ENCODE measurements at regions of chr2 and their contacts with region 1.

Region 1: GRCh38 chr2:148874868-148875341 is at the start of gene KIF5C:
- DNase-seq: peak; percentile 67 to 83 (median 76)
- ATAC-seq: peak; percentile 95
- H3K4me3 ChIP-seq: peak within 1 kb of the TSS; percentile 45
- H3K4me3 Mint-ChIP-seq: peak within 1 kb of the TSS; percentile 77 to 89 (median 86)
- H3K27ac ChIP-seq: no peak within 1 kb of the TSS
- H3K27ac Mint-ChIP-seq: peak within 1 kb of the TSS in 6 of 9 donors; percentile 4 to 82 (median 72)
- H3K4me1 ChIP-seq: peaks cover 5 to 6% of the 10 kb centered on the region in 2 donors
- H3K4me1 Mint-ChIP-seq: peaks cover 0 to 19% (median 14%) of the 10 kb centered on the region in 7 donors
- H3K27me3 ChIP-seq: no peaks in the 10 kb centered on the region
- H3K27me3 Mint-ChIP-seq: peaks cover 8 to 33% (median 28%) of the 10 kb centered on the region in 5 donors
- total RNA-seq, gene KIF5C: 3.6 to 14.3 (median 6.8) TPM

Region 2: DNA sequence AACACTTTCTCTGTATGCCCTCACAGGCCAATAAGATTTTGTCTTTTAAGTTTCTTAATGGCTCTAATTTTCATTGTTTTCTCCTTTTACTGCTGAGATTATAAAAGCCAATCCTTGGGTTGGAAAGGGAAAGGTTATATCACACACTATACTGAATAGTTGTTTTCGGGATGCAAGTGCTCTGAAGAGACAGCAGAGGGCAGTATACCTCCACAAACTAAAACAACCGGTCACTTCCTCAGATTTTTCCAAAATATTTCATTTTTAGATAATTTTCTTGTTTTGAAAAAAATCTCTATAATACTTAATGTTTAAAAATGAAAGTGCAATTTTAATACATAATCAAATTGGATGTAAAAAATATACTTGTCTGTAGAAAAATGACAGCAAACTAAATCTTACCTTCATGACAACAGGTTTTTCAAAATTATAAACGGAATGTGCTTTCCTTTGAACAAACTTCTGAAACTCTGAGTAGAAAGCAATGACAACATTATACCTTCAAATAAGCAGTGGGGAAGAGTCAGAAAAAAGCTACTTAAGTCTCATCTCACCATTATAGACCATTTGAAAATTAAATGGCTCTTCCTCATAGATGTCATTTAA is 937.1 kb before region 1 on chr2:
- CTCF ChIA-PET with region 1: no interaction called
- POLR2A ChIA-PET with region 1: no interaction called
- intact Hi-C with region 1: loop called (anchors 5 kb)
- DNase-seq: peak in 5 of 9 donors; percentile 25 to 40 (median 34)
- ATAC-seq: peak; percentile 79
- H3K4me3 ChIP-seq: no peak overlapping the region
- H3K4me3 Mint-ChIP-seq: no peak overlapping the region
- H3K27ac ChIP-seq: no peak overlapping the region
- H3K27ac Mint-ChIP-seq: peak overlapping the region in 4 of 9 donors; percentile 26 to 75 (median 42)
- H3K4me1 ChIP-seq: no peaks in the 10 kb centered on the region
- H3K4me1 Mint-ChIP-seq: peaks cover 0 to 2% (median 0%) of the 10 kb centered on the region in 7 donors
- H3K27me3 ChIP-seq: no peaks in the 10 kb centered on the region
- H3K27me3 Mint-ChIP-seq: no peaks in the 10 kb centered on the region

Region 3: DNA sequence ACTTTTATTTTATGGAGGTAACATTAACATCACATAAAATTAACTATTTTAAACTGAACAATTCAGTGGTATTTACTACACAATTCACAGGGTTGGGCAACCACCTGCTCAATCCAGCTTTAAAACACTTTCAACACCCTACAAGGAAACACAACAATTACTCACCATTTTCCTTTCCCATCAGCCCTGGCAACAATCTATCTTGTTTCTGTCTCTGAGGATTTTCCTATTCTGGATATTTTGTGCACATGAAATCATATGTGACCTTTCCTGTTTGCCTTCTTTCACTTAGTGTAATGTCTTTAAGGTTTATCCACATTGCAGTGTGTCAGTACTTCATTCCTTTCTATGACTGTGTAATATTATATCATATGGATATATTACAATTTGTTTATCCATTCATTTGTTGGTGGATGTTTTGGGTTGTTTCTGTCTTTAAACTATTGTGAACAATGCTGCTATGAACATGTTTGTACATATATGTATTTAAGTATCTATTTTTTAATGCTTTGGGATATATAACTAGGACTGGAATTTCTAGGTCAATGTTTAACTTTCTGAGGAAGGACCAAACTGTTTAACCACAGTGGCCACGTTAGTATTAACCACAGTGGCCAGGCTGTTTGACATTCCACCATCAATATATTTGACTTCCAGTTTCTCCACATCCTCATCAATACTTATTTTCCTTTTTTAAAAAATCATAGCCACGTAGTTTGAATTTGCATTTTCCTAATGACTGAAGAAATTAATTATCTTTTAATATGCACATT is 72.3 kb before region 1 on chr2:
- CTCF ChIA-PET with region 1: no interaction called
- POLR2A ChIA-PET with region 1: no interaction called
- intact Hi-C with region 1: loop called in 1 of 2 experiments (anchors 5 kb)
- DNase-seq: no peak
- ATAC-seq: no peak
- H3K4me3 ChIP-seq: no peak overlapping the region
- H3K4me3 Mint-ChIP-seq: no peak overlapping the region
- H3K27ac ChIP-seq: no peak overlapping the region
- H3K27ac Mint-ChIP-seq: no peak overlapping the region
- H3K4me1 ChIP-seq: no peaks in the 10 kb centered on the region
- H3K4me1 Mint-ChIP-seq: no peaks in the 10 kb centered on the region
- H3K27me3 ChIP-seq: no peaks in the 10 kb centered on the region
- H3K27me3 Mint-ChIP-seq: peaks cover 4 to 30% (median 6%) of the 10 kb centered on the region in 5 donors

Region 4: GRCh38 chr2:148888003-148888501 is 13.1 kb after region 1 on chr2:
- CTCF ChIA-PET with region 1: interaction called, 6 read pairs
- POLR2A ChIA-PET with region 1: no interaction called
- intact Hi-C with region 1: loop called (anchors 1 kb)
- DNase-seq: peak in 2 of 9 donors; percentile 3 to 16
- ATAC-seq: peak; percentile 47
- H3K4me3 ChIP-seq: peak overlapping the region; percentile 28
- H3K4me3 Mint-ChIP-seq: peak overlapping the region; percentile 68 to 88 (median 75)
- H3K27ac ChIP-seq: no peak overlapping the region
- H3K27ac Mint-ChIP-seq: no peak overlapping the region
- H3K4me1 ChIP-seq: peaks cover 0 to 4% of the 10 kb centered on the region in 2 donors
- H3K4me1 Mint-ChIP-seq: peaks cover 0 to 18% (median 15%) of the 10 kb centered on the region in 7 donors
- H3K27me3 ChIP-seq: peaks cover 0 to 15% of the 10 kb centered on the region in 2 donors
- H3K27me3 Mint-ChIP-seq: peaks cover 13 to 70% (median 37%) of the 10 kb centered on the region in 5 donors

Region 5: GRCh38 chr2:148989882-148990493 is 115.1 kb after region 1 on chr2:
- CTCF ChIA-PET with region 1: no interaction called
- POLR2A ChIA-PET with region 1: no interaction called
- intact Hi-C with region 1: loop called in 1 of 2 experiments (anchors 5 kb)
- DNase-seq: peak in 8 of 9 donors; percentile 28 to 65 (median 56)
- ATAC-seq: peak; percentile 86
- H3K4me3 ChIP-seq: no peak overlapping the region
- H3K4me3 Mint-ChIP-seq: no peak overlapping the region
- H3K27ac ChIP-seq: no peak overlapping the region
- H3K27ac Mint-ChIP-seq: no peak overlapping the region
- H3K4me1 ChIP-seq: no peaks in the 10 kb centered on the region
- H3K4me1 Mint-ChIP-seq: peaks cover 0 to 4% (median 4%) of the 10 kb centered on the region in 7 donors
- H3K27me3 ChIP-seq: no peaks in the 10 kb centered on the region
- H3K27me3 Mint-ChIP-seq: no peaks in the 10 kb centered on the region